ENCODE measurements at regions of chr9 and their contacts with region 1.

Region 1: DNA sequence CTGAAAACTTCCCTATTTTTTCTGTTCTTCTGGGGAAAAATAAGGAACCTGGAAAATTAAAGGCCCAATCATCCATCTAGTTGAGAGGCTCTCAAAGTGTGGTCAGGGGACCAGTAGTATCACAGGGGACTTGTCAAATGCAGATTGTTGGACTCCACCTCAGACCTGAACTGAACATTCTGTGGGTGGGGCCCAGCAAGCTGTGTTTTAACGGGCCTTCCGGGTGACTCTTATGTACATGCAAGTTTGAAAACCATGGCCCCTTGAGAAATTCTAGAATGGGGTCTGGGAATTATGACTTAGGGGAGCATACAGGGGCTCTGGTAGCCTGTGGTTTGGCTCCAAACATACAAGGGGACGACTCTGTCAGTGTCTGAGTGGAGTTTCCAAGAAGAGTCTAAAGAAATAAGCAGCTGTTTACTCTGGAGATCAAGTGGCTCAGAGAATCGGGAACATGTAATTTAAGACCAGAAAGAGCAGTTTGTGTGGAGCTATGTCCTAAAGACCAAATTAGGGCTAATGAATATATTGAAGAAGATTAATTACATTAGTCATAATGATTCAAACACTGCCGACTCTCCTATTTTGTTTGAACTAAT is 177.4 kb downstream of the SLC28A3 start:
- DNase-seq: no peak
- ATAC-seq: peak; percentile 38

Region 2: GRCh38 chr9:83675466-83675865 is 487.7 kb before region 1 on chr9:
- intact Hi-C with region 1: no loop called
- DNase-seq: no peak
- ATAC-seq: no peak

Region 3: DNA sequence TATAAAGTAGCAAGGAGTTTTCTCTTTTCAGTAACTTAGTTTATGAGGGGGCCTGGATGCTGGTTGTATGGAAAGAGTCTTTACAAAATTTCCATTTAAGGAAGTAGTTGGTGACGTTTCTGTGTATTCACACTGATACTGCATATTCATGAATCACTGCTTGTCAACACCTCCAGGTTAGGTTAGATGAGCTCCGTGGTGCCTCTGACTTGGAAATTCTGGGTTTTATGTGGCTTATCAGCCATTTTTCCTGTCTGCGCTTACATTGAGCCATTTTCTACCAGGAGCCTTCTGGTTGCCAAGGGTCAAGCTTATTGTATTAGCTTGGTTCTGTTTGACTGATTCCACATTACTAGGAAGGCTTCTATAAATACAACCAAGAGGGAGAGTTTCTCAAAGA is 49.1 kb after region 1 on chr9:
- intact Hi-C with region 1: loop called in 1 of 2 experiments (anchors 5 kb)
- DNase-seq: no peak
- ATAC-seq: no peak

Measured in left colon (tissue), 2 donors.